ENCODE measurements at regions of chr18 and their contacts with region 1.

Region 1: GRCh38 chr18:68104036-68104435 is 587.5 kb upstream of the DSEL start:
- DNase-seq: no peak
- H3K4me3 ChIP-seq: no peak overlapping the region
- H3K27ac ChIP-seq: no peak overlapping the region
- H3K4me1 ChIP-seq: no peaks in the 10 kb centered on the region
- H3K27me3 ChIP-seq: no peaks in the 10 kb centered on the region
- CTCF ChIP-seq: no peak
- POLR2A ChIP-seq: no peak

Region 2: GRCh38 chr18:68233018-68233417 is 129.0 kb after region 1 on chr18:
- intact Hi-C with region 1: no loop called
- DNase-seq: no peak
- H3K4me3 ChIP-seq: no peak overlapping the region
- H3K27ac ChIP-seq: no peak overlapping the region
- H3K4me1 ChIP-seq: no peaks in the 10 kb centered on the region
- H3K27me3 ChIP-seq: no peaks in the 10 kb centered on the region
- CTCF ChIP-seq: no peak
- POLR2A ChIP-seq: no peak

Region 3: DNA sequence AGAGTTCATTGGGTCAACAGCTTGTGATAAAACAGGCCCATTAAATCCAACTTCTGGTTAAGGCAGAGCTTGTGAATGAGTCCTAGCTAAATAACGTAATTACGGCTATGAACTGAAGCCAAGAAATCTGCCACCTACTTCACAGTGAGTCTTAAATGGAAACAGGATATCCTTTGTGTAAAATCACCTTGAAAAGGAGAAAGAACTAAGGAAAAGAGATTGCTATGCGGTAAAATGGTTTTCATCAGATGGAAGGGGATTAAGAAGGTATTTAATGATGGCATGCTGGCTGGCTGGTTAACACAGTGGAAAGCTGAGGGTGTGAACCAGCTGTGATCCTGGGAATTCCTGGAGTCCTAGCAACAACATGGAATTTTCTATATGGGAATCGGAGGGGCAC is 1453.2 kb after region 1 on chr18:
- intact Hi-C with region 1: loop called (anchors 10 kb)
- DNase-seq: no peak
- H3K4me3 ChIP-seq: no peak overlapping the region
- H3K27ac ChIP-seq: no peak overlapping the region
- H3K4me1 ChIP-seq: no peaks in the 10 kb centered on the region
- H3K27me3 ChIP-seq: no peaks in the 10 kb centered on the region
- CTCF ChIP-seq: no peak
- POLR2A ChIP-seq: no peak

Measured in breast epithelium (tissue), 4 donors.